ENCODE measurements at regions of chr4 and their contacts with region 1.

Region 1: GRCh38 chr4:6087673-6088341 is 69.6 kb upstream of the C4orf50 start:
- DNase-seq: peak; percentile 51
- ATAC-seq: peak; percentile 93
- H3K4me3 ChIP-seq: no peak overlapping the region
- H3K27ac ChIP-seq: no peak overlapping the region
- H3K4me1 ChIP-seq: no peaks in the 10 kb centered on the region
- H3K27me3 ChIP-seq: peaks cover 22% of the 10 kb centered on the region
- CTCF ChIP-seq: peak; percentile 70 to 80 (median 74)
- POLR2A ChIP-seq: no peak
- RAD21 ChIP-seq: peak; percentile 73

Region 2: GRCh38 chr4:6062133-6062532 is 25.7 kb before region 1 on chr4:
- CTCF ChIA-PET with region 1: no interaction called
- POLR2A ChIA-PET with region 1: no interaction called
- RAD21 ChIA-PET with region 1: no interaction called
- intact Hi-C with region 1: loop called (anchors 1 kb)
- DNase-seq: no peak
- ATAC-seq: no peak
- H3K4me3 ChIP-seq: no peak overlapping the region
- H3K27ac ChIP-seq: no peak overlapping the region
- H3K4me1 ChIP-seq: no peaks in the 10 kb centered on the region
- H3K27me3 ChIP-seq: peaks cover 11% of the 10 kb centered on the region; the same call in 1 of the 2 replicates
- CTCF ChIP-seq: no peak
- POLR2A ChIP-seq: no peak
- RAD21 ChIP-seq: no peak

Region 3: DNA sequence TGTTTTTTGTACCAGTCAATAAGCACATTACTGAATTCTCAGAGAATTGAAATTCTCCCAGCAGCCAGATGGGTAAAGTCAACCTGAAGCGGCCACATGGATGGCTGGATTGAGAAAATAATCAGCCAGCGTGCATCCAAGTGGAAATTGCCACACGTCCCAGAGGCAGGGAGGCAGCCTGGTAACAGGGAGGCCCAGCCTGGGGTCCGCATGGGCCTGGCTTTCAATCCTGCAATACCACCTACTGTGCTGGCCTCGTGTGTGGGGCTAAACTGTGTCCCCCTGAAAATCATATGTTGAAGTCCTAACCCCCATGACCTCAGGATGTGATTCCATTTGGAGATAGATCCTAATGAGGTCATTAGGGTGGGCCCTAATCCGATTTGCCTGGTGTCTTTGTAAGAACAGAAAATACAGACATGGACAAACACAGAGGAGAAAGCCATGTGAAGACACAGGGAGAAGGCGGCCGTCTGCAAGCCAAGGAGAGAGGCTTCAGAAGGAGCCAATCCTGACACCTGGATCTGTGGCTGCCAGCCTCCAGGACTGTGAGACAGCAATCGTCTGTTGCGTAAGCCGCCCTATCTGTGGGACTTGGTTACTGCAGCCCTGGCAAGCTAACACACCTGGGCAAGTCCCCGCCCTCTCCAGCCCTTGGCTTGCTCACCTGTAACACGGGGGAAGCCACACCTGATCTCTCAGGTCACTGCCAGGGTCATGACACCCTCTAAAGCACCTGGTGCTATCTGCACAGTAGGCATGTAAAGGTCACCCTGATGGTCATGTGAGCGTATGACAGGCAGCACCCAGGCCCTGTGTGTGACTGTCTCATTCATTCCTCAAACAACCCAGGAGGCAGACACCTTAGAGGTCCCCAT is 22.3 kb after region 1 on chr4:
- CTCF ChIA-PET with region 1: no interaction called
- POLR2A ChIA-PET with region 1: no interaction called
- RAD21 ChIA-PET with region 1: no interaction called
- intact Hi-C with region 1: no loop called
- DNase-seq: peak; percentile 65
- ATAC-seq: peak; percentile 99
- H3K4me3 ChIP-seq: no peak overlapping the region
- H3K27ac ChIP-seq: no peak overlapping the region
- H3K4me1 ChIP-seq: no peaks in the 10 kb centered on the region
- H3K27me3 ChIP-seq: no peaks in the 10 kb centered on the region
- CTCF ChIP-seq: peak in 2 of 3 experiments; percentile 68 to 76; a peak in 4 of 6 replicates
- POLR2A ChIP-seq: no peak
- RAD21 ChIP-seq: peak; percentile 10; the same call in 1 of the 2 replicates

Region 4: GRCh38 chr4:6647582-6648230 is 559.9 kb after region 1 on chr4:
- CTCF ChIA-PET with region 1: no interaction called
- POLR2A ChIA-PET with region 1: no interaction called
- RAD21 ChIA-PET with region 1: no interaction called
- intact Hi-C with region 1: no loop called
- DNase-seq: no peak
- ATAC-seq: peak; percentile 61; the same call in 1 of the 2 replicates
- H3K4me3 ChIP-seq: no peak overlapping the region
- H3K27ac ChIP-seq: no peak overlapping the region
- H3K4me1 ChIP-seq: no peaks in the 10 kb centered on the region
- H3K27me3 ChIP-seq: no peaks in the 10 kb centered on the region
- CTCF ChIP-seq: no peak
- POLR2A ChIP-seq: no peak
- RAD21 ChIP-seq: no peak